ENCODE measurements at regions of chr13 and their contacts with region 1.

Region 1: DNA sequence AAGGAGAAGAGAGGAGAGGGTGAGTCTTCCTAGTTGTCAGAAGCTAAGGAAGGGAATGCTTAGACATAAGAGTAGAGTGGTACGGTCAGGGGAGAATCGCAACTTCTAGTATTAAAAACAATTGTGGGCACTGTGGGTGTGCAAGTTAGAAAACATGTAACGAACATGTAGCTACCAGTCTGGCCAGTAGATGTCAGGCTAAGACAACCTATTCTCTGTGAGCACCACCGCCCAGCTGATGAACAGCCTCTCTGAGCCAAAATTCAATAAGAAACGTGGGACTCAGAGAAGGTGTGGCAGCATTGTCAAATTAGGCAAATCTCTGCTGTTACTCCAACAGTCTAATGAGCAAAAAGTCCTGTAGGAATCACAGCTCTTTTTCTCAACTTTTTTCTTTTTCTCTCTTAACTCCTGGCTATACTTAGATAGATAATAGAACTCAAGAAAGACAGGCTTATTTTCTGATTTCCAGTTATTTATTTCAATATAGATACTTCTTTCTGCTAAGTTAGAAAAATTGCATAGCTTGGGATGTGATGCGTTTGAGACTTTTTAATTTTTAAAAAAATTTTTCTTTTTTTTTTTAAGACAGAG is 186.2 kb downstream of the USP12 start:
- DNase-seq: peak; percentile 82
- H3K4me3 Mint-ChIP-seq: no peak overlapping the region
- H3K27ac Mint-ChIP-seq: no peak overlapping the region
- H3K4me1 Mint-ChIP-seq: peaks cover 12% of the 10 kb centered on the region
- H3K27me3 Mint-ChIP-seq: peaks cover 3% of the 10 kb centered on the region

Region 2: GRCh38 chr13:27283906-27284493 is 298.6 kb after region 1 on chr13:
- CTCF ChIA-PET with region 1: interaction called, 11 read pairs
- POLR2A ChIA-PET with region 1: no interaction called
- DNase-seq: no peak
- H3K4me3 Mint-ChIP-seq: no peak overlapping the region
- H3K27ac Mint-ChIP-seq: no peak overlapping the region
- H3K4me1 Mint-ChIP-seq: no peaks in the 10 kb centered on the region
- H3K27me3 Mint-ChIP-seq: no peaks in the 10 kb centered on the region

Measured in activated CD4-positive, alpha-beta T cell treated with anti-CD3 and anti-CD28 coated beads, Interleukin-2, amount 10 ng/mL, durations not matched to agents 7 days and 5 days (primary cell).